Thyroid gland (tissue), 4 donors: ENCODE measurements at regions of chr1 and their contacts with region 1.

Region 1: GRCh38 chr1:118151312-118151937 is 33.6 kb downstream of the SPAG17 start:
- DNase-seq: peak; percentile 67 to 78
- H3K4me3 ChIP-seq: no peak overlapping the region
- H3K27ac ChIP-seq: no peak overlapping the region
- H3K4me1 ChIP-seq: peaks cover 0 to 5% of the 10 kb centered on the region in 2 donors
- H3K27me3 ChIP-seq: no peaks in the 10 kb centered on the region
- CTCF ChIP-seq: peak; percentile 22 to 79 (median 57)
- POLR2A ChIP-seq: no peak

Region 2: GRCh38 chr1:118421868-118422350 is 270.5 kb after region 1 on chr1:
- intact Hi-C with region 1: no loop called
- DNase-seq: no peak
- H3K4me3 ChIP-seq: no peak overlapping the region
- H3K27ac ChIP-seq: no peak overlapping the region
- H3K4me1 ChIP-seq: no peaks in the 10 kb centered on the region
- H3K27me3 ChIP-seq: no peaks in the 10 kb centered on the region
- CTCF ChIP-seq: no peak
- POLR2A ChIP-seq: no peak

Region 3: DNA sequence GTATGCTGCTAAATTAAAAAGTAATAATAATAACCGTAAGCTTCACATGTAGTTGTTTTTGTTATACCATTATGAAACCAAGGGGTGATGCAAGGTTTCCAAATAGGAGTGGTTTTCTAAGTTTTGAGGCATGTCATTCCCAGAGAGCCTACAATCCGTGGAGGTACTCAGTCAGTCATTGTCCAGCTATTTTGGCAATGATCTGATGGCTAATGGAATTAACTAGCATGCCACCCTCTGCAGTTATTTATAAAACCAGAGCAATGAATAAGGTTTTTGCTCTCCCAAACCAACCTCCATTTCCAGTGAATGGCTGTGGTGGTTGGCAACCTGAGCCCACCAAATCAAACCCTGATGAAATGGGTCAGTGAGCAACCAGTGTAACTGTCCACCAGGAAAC is 730.3 kb after region 1 on chr1:
- intact Hi-C with region 1: no loop called
- DNase-seq: no peak
- H3K4me3 ChIP-seq: no peak overlapping the region
- H3K27ac ChIP-seq: no peak overlapping the region
- H3K4me1 ChIP-seq: no peaks in the 10 kb centered on the region
- H3K27me3 ChIP-seq: no peaks in the 10 kb centered on the region
- CTCF ChIP-seq: no peak
- POLR2A ChIP-seq: no peak

Region 4: GRCh38 chr1:118989878-118990378 is 838.5 kb after region 1 on chr1:
- intact Hi-C with region 1: loop called (anchors 10 kb)
- DNase-seq: no peak
- H3K4me3 ChIP-seq: no peak overlapping the region
- H3K27ac ChIP-seq: no peak overlapping the region
- H3K4me1 ChIP-seq: peaks cover 7 to 18% of the 10 kb centered on the region in 2 donors
- H3K27me3 ChIP-seq: peaks cover 97% of the 10 kb centered on the region
- CTCF ChIP-seq: no peak
- POLR2A ChIP-seq: no peak